ENCODE measurements at regions of chr1 and their contacts with region 1.

Region 1: GRCh38 chr1:100459358-100460114 is 78.4 kb upstream of the GPR88 start:
- DNase-seq: peak; percentile 77
- ATAC-seq: peak; percentile 95
- H3K4me3 ChIP-seq: no peak overlapping the region
- H3K27ac ChIP-seq: no peak overlapping the region
- H3K4me1 ChIP-seq: no peaks in the 10 kb centered on the region
- H3K27me3 ChIP-seq: no peaks in the 10 kb centered on the region
- CTCF ChIP-seq: peak; percentile 94

Region 2: DNA sequence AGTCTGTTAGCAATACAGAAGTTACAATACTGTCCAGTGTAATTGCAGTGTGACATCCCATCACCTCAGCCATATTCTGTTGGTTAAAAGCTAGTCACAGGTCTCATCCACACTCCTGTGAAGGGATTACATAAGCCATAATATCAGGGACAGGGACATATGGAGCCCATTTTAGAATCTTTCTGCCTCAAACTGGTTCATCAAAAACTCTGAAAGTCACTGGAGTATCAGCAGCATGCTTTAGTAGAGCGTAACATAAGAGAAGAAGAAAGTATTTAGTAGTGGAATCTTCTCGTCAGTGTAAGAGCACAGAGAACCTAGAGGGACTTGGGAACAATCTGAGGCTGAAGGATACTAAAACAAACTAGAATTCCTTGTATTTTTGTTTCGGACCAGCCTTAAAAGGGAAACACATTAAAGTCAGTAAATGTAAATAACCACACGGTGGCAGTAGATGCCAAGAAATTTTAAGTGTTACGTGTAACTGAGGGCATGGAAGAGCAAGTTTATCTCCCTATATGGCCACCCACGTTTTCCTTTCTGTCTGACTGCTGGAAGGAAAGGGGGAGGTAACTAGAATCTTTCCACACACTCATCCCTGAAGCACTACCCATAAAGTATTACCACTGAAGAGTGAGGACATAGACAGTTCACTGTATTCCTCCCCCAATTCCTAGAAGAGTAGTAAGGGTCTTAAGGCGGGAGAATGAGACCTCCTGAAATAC is 651.0 kb before region 1 on chr1:
- CTCF ChIA-PET with region 1: no interaction called
- POLR2A ChIA-PET with region 1: interaction called, 4 read pairs
- intact Hi-C with region 1: loop called (anchors 1 kb)
- DNase-seq: peak; percentile 93
- ATAC-seq: peak; percentile 91
- H3K4me3 ChIP-seq: peak overlapping the region; percentile 46
- H3K27ac ChIP-seq: no peak overlapping the region
- H3K4me1 ChIP-seq: peaks cover 10% of the 10 kb centered on the region; the same call in 1 of the 2 replicates
- H3K27me3 ChIP-seq: peaks cover 24% of the 10 kb centered on the region
- CTCF ChIP-seq: peak; percentile 76

Region 3: GRCh38 chr1:100132566-100133477 is 326.7 kb before region 1 on chr1 and contains the starts of genes SASS6 and TRMT13:
- CTCF ChIA-PET with region 1: no interaction called
- POLR2A ChIA-PET with region 1: no interaction called
- intact Hi-C with region 1: loop called (anchors 5 kb)
- DNase-seq: peak; percentile 97
- ATAC-seq: peak; percentile 94
- H3K4me3 ChIP-seq: peak within 1 kb of the TSS; percentile 77
- H3K27ac ChIP-seq: peak within 1 kb of the TSS; percentile 59
- H3K4me1 ChIP-seq: peaks cover 29% of the 10 kb centered on the region
- H3K27me3 ChIP-seq: no peaks in the 10 kb centered on the region
- CTCF ChIP-seq: no peak
- total RNA-seq, gene SASS6: 9.0 and 9.2 TPM in 2 replicates
- total RNA-seq, gene TRMT13: 6.7 and 9.4 TPM in 2 replicates

Region 4: GRCh38 chr1:100265931-100266740 is 193.4 kb before region 1 on chr1 and contains the start of gene RTCA:
- CTCF ChIA-PET with region 1: interaction called, 3 read pairs
- POLR2A ChIA-PET with region 1: no interaction called
- intact Hi-C with region 1: loop called (anchors 10 kb)
- DNase-seq: peak; percentile 96
- ATAC-seq: peak; percentile 96
- H3K4me3 ChIP-seq: peak within 1 kb of the TSS; percentile 97
- H3K27ac ChIP-seq: peak within 1 kb of the TSS; percentile 23
- H3K4me1 ChIP-seq: peaks cover 10% of the 10 kb centered on the region
- H3K27me3 ChIP-seq: no peaks in the 10 kb centered on the region
- CTCF ChIP-seq: no peak
- total RNA-seq, gene RTCA: 34.4 and 41.7 TPM in 2 replicates

Region 5: DNA sequence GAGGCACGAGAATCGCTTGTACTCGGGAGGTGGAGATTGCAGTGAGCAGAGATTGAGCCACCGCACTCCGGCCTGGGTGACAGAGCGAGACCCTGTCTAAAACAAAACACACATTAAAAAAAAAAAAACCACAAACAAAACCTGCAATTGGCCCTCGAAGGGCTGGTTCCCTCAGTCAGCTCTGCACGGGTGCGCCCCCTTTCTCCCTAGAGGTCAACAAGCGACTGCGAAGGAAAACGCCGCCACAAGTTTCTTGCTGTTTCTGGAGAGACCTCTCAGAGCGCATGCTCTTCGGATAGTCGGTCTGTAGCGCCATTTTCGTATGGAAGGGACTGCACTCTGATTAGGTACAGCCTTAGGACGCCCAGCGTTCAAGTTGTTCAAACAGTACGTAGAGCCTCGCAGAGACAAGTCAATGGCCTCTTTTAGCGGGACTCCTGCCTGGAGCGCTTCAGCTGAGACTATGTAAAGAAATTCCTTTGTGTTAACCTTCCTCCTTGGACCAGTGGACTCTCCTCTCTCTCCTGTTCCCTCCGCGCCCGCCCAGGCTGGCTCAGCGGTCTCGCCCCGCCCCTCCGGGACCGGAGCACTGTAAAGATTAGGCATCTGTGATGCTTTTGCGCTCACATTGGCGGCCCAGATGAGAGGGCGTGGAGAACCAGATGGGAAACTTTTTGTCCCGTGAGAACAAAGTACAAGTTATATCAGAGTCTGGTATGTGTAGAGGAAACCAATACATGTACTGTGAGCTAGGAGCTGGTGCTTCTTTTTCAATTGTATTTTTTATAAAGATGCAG is 108.2 kb before region 1 on chr1:
- CTCF ChIA-PET with region 1: no interaction called
- POLR2A ChIA-PET with region 1: no interaction called
- intact Hi-C with region 1: loop called (anchors 2 kb)
- DNase-seq: peak; percentile 90
- ATAC-seq: peak; percentile 71
- H3K4me3 ChIP-seq: peak overlapping the region; percentile 92
- H3K27ac ChIP-seq: peak overlapping the region; percentile 71
- H3K4me1 ChIP-seq: peaks cover 29% of the 10 kb centered on the region
- H3K27me3 ChIP-seq: no peaks in the 10 kb centered on the region
- CTCF ChIP-seq: peak; percentile 55

Region 6: GRCh38 chr1:100502052-100502783 is 42.7 kb after region 1 on chr1:
- CTCF ChIA-PET with region 1: no interaction called
- POLR2A ChIA-PET with region 1: no interaction called
- intact Hi-C with region 1: no loop called
- DNase-seq: peak; percentile 93
- ATAC-seq: peak; percentile 96
- H3K4me3 ChIP-seq: no peak overlapping the region
- H3K27ac ChIP-seq: peak overlapping the region; percentile 78
- H3K4me1 ChIP-seq: peaks cover 27% of the 10 kb centered on the region
- H3K27me3 ChIP-seq: no peaks in the 10 kb centered on the region
- CTCF ChIP-seq: no peak

Region 7: DNA sequence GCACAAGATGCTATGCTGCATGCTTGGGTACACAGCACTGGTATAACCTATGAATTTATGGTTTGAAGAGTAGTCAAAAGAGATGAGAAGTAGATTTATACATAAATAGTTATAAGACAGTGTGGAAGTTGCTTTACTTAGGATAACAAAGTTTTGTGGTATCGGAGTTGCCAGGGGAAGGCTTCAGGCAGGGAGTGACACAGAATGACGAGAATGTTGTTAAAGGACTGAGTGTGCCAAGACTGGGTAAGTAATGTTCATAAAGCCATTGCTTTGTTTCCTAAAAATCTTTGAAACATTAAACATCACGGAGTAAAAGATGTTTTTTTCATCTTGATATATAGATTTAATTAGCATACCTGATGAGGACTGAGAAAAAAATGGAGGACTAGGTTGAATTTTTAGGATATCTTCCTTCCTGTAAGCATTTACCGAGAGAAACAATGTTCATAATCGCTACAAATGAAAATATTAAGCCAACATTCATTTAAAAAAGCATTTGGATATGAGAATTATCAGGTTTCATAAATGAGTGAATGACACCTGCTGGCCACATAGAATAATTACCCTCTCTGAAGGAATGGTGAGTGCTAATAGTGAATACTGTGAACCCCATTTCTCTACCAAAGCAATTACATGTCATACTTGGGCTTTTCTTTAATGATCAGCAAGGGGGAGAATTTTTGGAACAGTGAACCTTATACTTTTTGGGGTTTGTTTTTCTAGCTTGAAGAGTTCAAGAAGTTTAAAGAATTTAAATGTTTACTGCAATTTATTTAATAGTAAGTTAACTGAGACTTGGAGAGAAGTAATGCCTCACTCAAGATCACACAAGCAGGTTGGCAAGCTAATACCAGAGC is 406.7 kb after region 1 on chr1:
- CTCF ChIA-PET with region 1: interaction called, 12 read pairs
- POLR2A ChIA-PET with region 1: no interaction called
- intact Hi-C with region 1: loop called (anchors 1 kb)
- DNase-seq: peak; percentile 59
- ATAC-seq: peak; percentile 62
- H3K4me3 ChIP-seq: peak overlapping the region; percentile 16; the same call in 1 of the 2 replicates
- H3K27ac ChIP-seq: no peak overlapping the region
- H3K4me1 ChIP-seq: peaks cover 11% of the 10 kb centered on the region
- H3K27me3 ChIP-seq: no peaks in the 10 kb centered on the region
- CTCF ChIP-seq: peak; percentile 86